ENCODE measurements at regions of chr7 and their contacts with region 1.

Region 1: DNA sequence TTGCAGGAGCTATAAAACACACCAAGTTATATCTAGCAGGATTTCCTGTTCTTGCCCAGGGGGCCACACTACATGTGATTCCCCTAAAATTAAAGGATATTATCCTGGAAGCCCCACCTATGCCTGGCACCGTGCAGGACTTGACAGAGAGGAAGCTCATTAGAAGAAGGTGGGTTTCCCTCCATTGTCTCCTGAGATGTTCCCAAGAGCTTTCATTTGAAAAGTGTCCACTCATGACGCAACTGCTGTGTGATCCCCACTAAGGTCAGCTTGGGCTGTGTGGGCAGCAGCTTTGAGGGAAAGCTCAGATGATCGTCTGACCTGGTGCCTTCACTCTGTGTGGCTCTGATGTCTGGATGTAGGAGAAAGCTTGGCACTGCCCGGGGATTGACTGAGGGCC is 53.5 kb downstream of the RAMP3 start:
- DNase-seq: no peak
- ATAC-seq: peak; percentile 49

Region 2: GRCh38 chr7:45021604-45022296 is 189.3 kb before region 1 on chr7:
- intact Hi-C with region 1: no loop called
- DNase-seq: no peak
- ATAC-seq: no peak

Region 3: DNA sequence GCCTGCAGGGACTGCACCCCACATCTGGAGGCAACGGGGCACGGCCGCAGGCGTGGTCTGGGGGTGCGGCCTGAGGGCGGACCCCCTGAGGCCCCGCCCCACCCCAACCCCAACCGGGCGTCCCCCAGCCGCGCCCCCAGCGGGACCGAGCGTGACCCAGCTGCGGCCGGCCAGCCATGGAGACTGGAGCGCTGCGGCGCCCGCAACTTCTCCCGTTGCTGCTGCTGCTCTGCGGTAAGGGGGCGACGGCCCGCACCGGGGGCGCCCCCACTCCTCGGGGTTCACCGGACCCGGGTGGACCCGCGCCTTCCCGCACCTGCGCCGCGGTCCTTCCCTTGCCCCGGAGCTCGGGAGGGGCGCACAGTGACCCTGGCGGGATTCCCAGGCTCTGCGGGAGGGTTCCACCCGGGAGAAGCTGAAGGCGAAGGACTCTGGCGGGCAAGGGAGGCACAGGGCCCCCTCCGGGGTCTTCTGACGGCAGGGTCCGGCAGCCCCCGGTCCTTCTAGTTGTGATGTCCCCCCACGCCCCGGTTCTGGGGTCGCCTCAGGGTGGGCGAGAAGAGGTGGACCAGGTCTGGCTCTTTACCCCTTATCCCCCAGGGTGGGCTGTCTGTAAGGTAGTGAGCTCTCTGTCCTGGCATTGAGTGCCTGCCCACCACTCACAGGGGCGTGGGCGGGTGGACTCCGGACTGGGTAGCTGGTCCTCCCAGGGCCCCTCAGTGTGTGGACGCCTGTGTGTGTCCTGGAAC is 53.2 kb before region 1 on chr7 and contains the start of gene RAMP3:
- intact Hi-C with region 1: loop called (anchors 2 kb)
- DNase-seq: no peak
- ATAC-seq: peak; percentile 40
- total RNA-seq, gene RAMP3: 33.8 TPM

Region 4: GRCh38 chr7:45178241-45179225 is 32.5 kb before region 1 on chr7:
- intact Hi-C with region 1: no loop called
- DNase-seq: no peak
- ATAC-seq: no peak

Region 5: DNA sequence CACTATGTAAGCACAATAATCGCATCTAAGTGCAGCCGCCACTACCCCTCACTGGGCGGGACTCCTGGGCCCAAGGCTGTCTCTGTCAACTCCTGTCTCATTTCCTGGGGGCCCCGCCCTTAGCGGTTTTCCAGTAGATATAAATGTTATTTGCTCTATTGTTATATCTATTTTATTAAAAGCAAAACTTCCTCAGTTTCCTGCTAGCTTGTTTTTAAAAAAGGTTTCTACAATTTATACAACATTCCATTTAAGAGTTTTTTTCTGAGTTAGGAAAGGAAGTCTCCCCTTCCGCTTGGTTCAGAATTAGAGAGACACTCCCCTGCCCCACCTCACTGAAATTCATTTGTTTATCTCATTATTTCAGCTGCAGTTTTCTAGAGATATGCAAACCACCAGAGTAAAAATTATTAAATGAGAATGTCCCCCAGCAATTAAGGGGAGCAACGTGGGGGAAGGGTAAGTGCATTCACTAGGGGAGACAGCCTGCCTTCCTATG is 29.3 kb after region 1 on chr7:
- intact Hi-C with region 1: loop called (anchors 2 kb)
- DNase-seq: no peak
- ATAC-seq: no peak